ENCODE measurements at regions of chr18 and their contacts with region 1.

Region 1: GRCh38 chr18:74264303-74265020 is 27.3 kb downstream of the CYB5A start:
- DNase-seq: peak; percentile 30
- ATAC-seq: peak; percentile 99
- H3K4me3 Mint-ChIP-seq: peak overlapping the region; percentile 59
- H3K27ac Mint-ChIP-seq: peak overlapping the region; percentile 86
- H3K4me1 Mint-ChIP-seq: peaks cover 36% of the 10 kb centered on the region
- H3K27me3 Mint-ChIP-seq: no peaks in the 10 kb centered on the region
- CTCF ChIP-seq: no peak

Region 2: GRCh38 chr18:74249181-74249968 is 15.1 kb before region 1 on chr18:
- CTCF ChIA-PET with region 1: interaction called, 3 read pairs
- POLR2A ChIA-PET with region 1: interaction called, 5 read pairs
- intact Hi-C with region 1: loop called (anchors 1 kb)
- DNase-seq: no peak
- ATAC-seq: no peak
- H3K4me3 Mint-ChIP-seq: peak overlapping the region; percentile 6
- H3K27ac Mint-ChIP-seq: peak overlapping the region; percentile 80
- H3K4me1 Mint-ChIP-seq: peaks cover 51% of the 10 kb centered on the region
- H3K27me3 Mint-ChIP-seq: no peaks in the 10 kb centered on the region
- CTCF ChIP-seq: no peak

Region 3: DNA sequence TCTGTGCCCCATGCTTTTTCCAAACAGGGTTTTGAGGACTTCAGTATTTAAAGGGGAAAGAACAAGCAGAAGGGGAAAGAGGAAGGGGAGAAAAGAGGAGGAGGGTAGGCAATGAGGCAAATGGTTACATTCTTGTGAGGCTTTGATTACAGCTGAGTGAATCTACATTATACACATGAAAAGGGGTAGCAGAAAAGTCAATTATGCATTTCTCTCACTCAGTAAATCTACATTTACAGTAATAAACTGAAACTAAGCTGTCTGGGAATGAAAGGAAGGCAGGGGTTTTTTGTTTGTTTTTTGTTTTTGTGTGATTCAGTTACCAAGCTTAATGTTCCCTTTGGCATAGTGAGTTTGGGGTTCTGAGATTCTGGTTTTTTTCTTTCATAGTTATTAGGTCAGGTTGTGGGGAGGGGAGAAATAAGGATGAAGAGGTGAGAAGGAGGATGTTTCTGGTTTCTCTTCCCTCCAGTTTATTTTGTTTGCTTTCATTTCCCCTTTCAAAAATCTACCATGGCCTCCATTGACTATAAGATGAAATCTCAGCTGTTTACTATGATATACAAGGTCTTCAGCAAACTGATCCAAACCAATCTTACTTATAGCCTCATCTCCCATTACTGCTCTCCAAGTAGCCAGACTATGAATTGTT is 69.9 kb after region 1 on chr18:
- CTCF ChIA-PET with region 1: no interaction called
- POLR2A ChIA-PET with region 1: no interaction called
- intact Hi-C with region 1: loop called (anchors 1 kb)
- DNase-seq: no peak
- ATAC-seq: peak; percentile 83
- H3K4me3 Mint-ChIP-seq: peak overlapping the region; percentile 52
- H3K27ac Mint-ChIP-seq: peak overlapping the region; percentile 88
- H3K4me1 Mint-ChIP-seq: peaks cover 44% of the 10 kb centered on the region
- H3K27me3 Mint-ChIP-seq: no peaks in the 10 kb centered on the region
- CTCF ChIP-seq: no peak

Region 4: DNA sequence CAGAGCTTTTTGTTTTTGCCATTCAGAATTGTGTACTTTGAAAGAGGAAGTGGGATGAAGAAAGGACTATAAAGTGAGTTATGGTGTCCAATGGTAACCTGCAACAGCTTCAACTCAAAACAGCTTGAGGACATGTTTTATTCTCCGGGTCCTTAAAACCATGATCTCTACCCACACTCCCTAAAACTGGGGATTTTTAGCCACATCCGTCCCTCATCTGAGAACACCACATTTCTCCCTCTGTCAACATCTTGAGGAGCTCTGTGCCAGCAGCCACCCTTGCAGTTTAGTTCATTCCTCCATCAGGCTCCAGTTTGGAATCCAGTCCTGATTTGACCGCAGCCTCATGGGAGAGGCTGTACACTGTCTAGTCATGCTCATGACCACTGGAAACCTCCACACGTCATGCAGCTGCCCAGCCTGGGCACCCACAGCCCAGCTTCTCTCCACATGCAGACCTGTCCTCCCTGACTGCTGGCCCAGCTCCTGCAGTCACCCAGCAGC is 113.8 kb after region 1 on chr18:
- CTCF ChIA-PET with region 1: no interaction called
- POLR2A ChIA-PET with region 1: no interaction called
- intact Hi-C with region 1: no loop called
- DNase-seq: no peak
- ATAC-seq: no peak
- H3K4me3 Mint-ChIP-seq: no peak overlapping the region
- H3K27ac Mint-ChIP-seq: no peak overlapping the region
- H3K4me1 Mint-ChIP-seq: peaks cover 6% of the 10 kb centered on the region
- H3K27me3 Mint-ChIP-seq: peaks cover 3% of the 10 kb centered on the region
- CTCF ChIP-seq: no peak

Region 5: GRCh38 chr18:74731097-74731496 is 466.6 kb after region 1 on chr18:
- CTCF ChIA-PET with region 1: no interaction called
- POLR2A ChIA-PET with region 1: no interaction called
- intact Hi-C with region 1: no loop called
- DNase-seq: no peak
- ATAC-seq: no peak
- H3K4me3 Mint-ChIP-seq: no peak overlapping the region
- H3K27ac Mint-ChIP-seq: no peak overlapping the region
- H3K4me1 Mint-ChIP-seq: no peaks in the 10 kb centered on the region
- H3K27me3 Mint-ChIP-seq: no peaks in the 10 kb centered on the region
- CTCF ChIP-seq: no peak